ENCODE measurements at regions of chr5 and their contacts with region 1.

Region 1: GRCh38 chr5:87605663-87606062 is 192.9 kb upstream of the CCNH start:
- DNase-seq: no peak
- H3K4me3 ChIP-seq: no peak overlapping the region
- H3K27ac ChIP-seq: no peak overlapping the region
- H3K4me1 ChIP-seq: no peaks in the 10 kb centered on the region
- H3K27me3 ChIP-seq: no peaks in the 10 kb centered on the region
- CTCF ChIP-seq: no peak
- POLR2A ChIP-seq: no peak

Region 2: GRCh38 chr5:85732185-85732584 is 1873.5 kb before region 1 on chr5:
- intact Hi-C with region 1: loop called (anchors 5 kb)
- DNase-seq: no peak
- H3K4me3 ChIP-seq: no peak overlapping the region
- H3K27ac ChIP-seq: no peak overlapping the region
- H3K4me1 ChIP-seq: no peaks in the 10 kb centered on the region
- H3K27me3 ChIP-seq: no peaks in the 10 kb centered on the region
- CTCF ChIP-seq: no peak
- POLR2A ChIP-seq: no peak

Measured in vagina (tissue), 2 donors.